Caco-2 (cell line): ENCODE measurements at regions of chr12 and their contacts with region 1.

Region 1: DNA sequence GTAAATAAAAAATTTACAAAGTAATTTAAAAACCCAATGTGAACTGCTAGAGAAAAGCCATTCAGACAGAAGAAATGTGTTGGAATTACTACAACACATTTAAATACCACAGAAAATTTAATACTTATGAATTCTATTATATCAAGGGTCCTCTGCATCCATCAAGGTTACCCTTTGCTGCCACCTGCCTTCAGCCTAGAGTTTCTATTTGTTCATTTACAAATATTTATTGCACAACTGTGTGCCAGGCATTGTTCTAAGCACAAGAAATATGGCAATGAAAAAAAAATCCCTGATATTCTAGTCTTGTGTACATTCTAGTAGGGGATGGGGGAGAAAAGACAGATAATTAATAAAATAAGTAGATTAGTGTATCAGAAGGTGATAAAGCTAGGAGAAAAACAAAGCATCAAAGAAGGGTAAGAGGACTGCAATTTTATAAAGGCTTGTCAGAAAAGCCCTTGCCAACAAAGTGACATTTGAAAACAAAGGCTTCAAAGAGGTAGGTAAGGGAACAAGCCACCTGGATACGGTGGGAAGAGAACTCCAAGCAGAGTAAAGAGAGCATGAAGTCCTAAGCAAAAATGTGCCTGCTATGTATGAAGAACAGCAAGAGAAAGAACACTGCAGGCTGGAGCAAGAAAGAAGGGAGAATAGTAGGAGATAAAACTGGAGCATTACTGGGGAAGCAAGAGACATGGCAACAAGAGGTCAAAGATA is 59.1 kb upstream of the SLC6A13 start:
- DNase-seq: peak in 1 of 2 experiments; percentile 43
- H3K4me3 ChIP-seq: no peak overlapping the region
- H3K4me3 Mint-ChIP-seq: no peak overlapping the region
- H3K27ac Mint-ChIP-seq: no peak overlapping the region
- H3K4me1 ChIP-seq: no peaks in the 10 kb centered on the region
- H3K4me1 Mint-ChIP-seq: peaks cover 6% of the 10 kb centered on the region
- H3K27me3 ChIP-seq: no peaks in the 10 kb centered on the region
- H3K27me3 Mint-ChIP-seq: no peaks in the 10 kb centered on the region
- CTCF ChIP-seq: peak; percentile 46 to 52

Region 2: GRCh38 chr12:203462-204260 is 118.1 kb before region 1 on chr12:
- CTCF ChIA-PET with region 1: no interaction called
- POLR2A ChIA-PET with region 1: no interaction called
- intact Hi-C with region 1: loop called (anchors 5 kb)
- DNase-seq: peak in 1 of 2 experiments; percentile 72
- H3K4me3 ChIP-seq: peak overlapping the region; percentile 36
- H3K4me3 Mint-ChIP-seq: peak overlapping the region; percentile 64
- H3K27ac Mint-ChIP-seq: no peak overlapping the region
- H3K4me1 ChIP-seq: peaks cover 10% of the 10 kb centered on the region; the same call in 1 of the 2 replicates
- H3K4me1 Mint-ChIP-seq: no peaks in the 10 kb centered on the region
- H3K27me3 ChIP-seq: no peaks in the 10 kb centered on the region
- H3K27me3 Mint-ChIP-seq: peaks cover 17% of the 10 kb centered on the region
- CTCF ChIP-seq: peak in 1 of 2 experiments; percentile 45